Gastrocnemius medialis (tissue), 4 donors: ENCODE measurements at regions of chr6 and their contacts with region 1.

Region 1: DNA sequence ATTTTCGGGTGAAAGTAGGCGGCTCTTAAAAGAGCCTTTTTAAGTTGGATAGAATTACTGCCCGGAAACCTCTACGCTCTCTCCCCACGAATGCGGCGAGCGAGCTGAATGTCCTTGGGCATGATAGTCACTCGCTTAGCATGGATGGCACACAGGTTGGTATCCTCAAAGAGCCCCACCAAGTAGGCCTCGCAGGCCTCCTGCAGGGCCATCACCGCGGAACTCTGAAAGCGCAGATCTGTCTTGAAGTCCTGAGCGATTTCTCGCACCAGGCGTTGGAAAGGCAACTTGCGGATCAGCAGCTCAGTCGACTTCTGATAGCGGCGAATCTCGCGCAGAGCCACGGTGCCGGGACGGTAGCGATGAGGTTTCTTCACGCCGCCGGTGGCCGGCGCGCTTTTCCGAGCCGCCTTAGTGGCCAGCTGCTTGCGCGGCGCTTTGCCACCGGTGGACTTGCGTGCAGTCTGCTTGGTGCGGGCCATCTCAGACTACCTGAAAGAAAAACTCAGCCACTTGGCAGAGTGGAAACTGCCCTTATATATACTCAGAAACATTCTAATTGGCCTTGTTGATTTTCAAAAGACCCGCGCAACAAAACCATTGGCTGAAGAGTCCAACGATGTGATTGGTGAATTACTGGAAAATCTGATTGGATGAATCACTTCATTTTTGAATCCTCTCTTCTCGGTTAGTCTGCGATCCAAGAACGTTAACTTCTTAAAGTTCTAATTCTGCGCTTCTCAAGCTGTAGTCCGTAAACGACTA is 93.9 kb upstream of the BTN3A2 start:
- DNase-seq: peak in 1 of 2 donors; percentile 45
- ATAC-seq: peak; percentile 55 to 66
- H3K4me3 ChIP-seq: peak overlapping the region; percentile 2 to 54 (median 40)
- H3K27ac ChIP-seq: peak overlapping the region in 3 of 4 donors; percentile 44 to 48 (median 45)
- H3K4me1 ChIP-seq: peaks cover 5 to 6% of the 10 kb centered on the region in 2 donors
- H3K27me3 ChIP-seq: peaks cover 66 to 71% (median 68%) of the 10 kb centered on the region in 3 donors
- CTCF ChIP-seq: no peak
- POLR2A ChIP-seq: no peak

Region 2: DNA sequence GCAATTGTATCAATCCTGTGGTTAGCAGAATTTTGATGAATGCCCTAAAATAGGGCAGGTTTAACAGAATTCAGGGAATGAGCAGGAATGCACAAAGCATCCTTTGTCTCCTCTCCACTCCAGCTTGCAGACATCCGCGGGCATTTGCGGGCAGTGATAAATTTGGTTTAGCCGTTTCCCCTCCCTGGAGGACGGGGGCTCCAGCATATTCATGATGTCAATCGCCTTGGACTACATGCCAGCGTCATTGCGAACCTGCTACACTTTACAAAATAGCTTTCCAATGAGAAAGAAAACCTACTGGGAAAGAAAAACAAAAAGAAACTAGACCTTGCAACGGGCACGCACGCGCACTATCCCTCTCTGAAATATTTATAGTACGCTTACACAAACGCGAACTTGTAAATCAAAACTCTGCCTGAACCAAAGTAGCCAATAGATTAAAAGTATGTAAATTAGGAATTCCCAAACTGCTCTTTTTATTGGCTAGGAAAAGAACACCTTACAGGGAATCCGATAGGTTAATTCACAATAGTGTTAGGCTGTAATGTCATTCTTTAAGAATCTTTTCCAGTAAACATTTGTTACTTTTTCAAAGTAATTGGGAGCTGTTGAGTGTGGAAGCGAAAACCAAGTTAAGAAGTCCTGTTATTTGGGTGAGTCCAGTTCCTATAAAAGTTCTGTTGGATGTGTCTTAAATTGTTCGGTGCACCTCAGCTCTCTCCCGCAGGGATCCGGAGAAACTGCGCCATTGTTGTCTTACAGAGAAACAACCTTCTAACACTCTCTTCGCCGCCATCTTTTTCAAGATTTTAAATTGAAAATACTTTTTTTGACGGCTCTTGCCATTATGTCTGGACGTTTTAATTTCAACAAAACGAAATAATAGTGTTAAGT is 47.2 kb before region 1 on chr6:
- in situ Hi-C with region 1: no loop called
- intact Hi-C with region 1: loop called (anchors 10 kb)
- DNase-seq: no peak
- ATAC-seq: peak; percentile 86 to 95
- H3K4me3 ChIP-seq: peak overlapping the region; percentile 46 to 52 (median 46)
- H3K27ac ChIP-seq: peak overlapping the region; percentile 64 to 75 (median 72)
- H3K4me1 ChIP-seq: no peaks in the 10 kb centered on the region
- H3K27me3 ChIP-seq: peaks cover 78 to 86% (median 86%) of the 10 kb centered on the region in 3 donors
- CTCF ChIP-seq: no peak
- POLR2A ChIP-seq: peak in 1 of 2 donors; percentile 61

Region 3: GRCh38 chr6:26493258-26493657 is 222.2 kb after region 1 on chr6:
- in situ Hi-C with region 1: no loop called
- intact Hi-C with region 1: no loop called
- DNase-seq: no peak
- ATAC-seq: no peak
- H3K4me3 ChIP-seq: no peak overlapping the region
- H3K27ac ChIP-seq: no peak overlapping the region
- H3K4me1 ChIP-seq: no peaks in the 10 kb centered on the region
- H3K27me3 ChIP-seq: no peaks in the 10 kb centered on the region
- CTCF ChIP-seq: no peak
- POLR2A ChIP-seq: no peak